ENCODE measurements at regions of chr13 and their contacts with region 1.

Region 1: GRCh38 chr13:46313432-46314257 is 73.4 kb downstream of the RUBCNL start:
- DNase-seq: peak in 1 of 2 donors; percentile 48
- ATAC-seq: peak; percentile 74 to 85 (median 85)
- H3K4me3 ChIP-seq: no peak overlapping the region
- H3K4me3 Mint-ChIP-seq: peak overlapping the region; percentile 83
- H3K27ac ChIP-seq: peak overlapping the region; percentile 93
- H3K27ac Mint-ChIP-seq: peak overlapping the region; percentile 80 to 99
- H3K4me1 ChIP-seq: peaks cover 13% of the 10 kb centered on the region
- H3K4me1 Mint-ChIP-seq: peaks cover 22% of the 10 kb centered on the region in 2 donors
- H3K27me3 ChIP-seq: no peaks in the 10 kb centered on the region
- H3K27me3 Mint-ChIP-seq: no peaks in the 10 kb centered on the region
- CTCF ChIP-seq: no peak

Region 2: DNA sequence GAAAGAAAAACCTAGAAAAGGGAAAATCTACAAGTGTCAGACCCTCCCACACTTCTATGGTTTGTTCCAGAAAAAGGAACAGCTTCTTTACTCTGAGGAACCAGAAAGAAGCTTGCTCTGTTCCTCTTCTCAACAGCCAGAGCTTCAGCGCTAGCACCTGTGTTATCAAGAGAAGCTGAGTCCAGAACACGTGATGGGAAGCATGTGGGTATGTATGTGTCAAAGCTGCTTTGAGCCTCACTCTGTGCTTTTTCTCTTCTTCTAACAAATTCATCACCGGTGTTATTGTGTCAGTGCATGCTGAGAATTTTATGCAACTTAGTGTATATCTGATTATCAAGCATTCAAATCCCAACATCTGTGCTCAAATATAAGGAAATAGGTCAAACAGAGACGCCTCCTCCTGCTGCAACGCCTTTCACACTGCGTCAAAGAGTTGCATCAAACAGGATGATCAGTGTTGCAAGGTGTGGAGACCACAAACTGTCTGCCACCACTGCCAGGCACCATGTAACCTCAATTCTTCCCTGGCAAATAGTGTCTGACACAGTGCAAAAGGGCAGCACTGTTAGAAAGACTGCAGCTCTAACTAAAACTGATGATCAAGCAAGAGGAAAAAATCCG is 18.0 kb before region 1 on chr13:
- intact Hi-C with region 1: loop called (anchors 1 kb)
- DNase-seq: peak; percentile 68 to 92
- ATAC-seq: peak; percentile 80 to 94 (median 91)
- H3K4me3 ChIP-seq: no peak overlapping the region
- H3K4me3 Mint-ChIP-seq: peak overlapping the region; percentile 79
- H3K27ac ChIP-seq: peak overlapping the region; percentile 83
- H3K27ac Mint-ChIP-seq: peak overlapping the region; percentile 88 to 97
- H3K4me1 ChIP-seq: peaks cover 29% of the 10 kb centered on the region
- H3K4me1 Mint-ChIP-seq: peaks cover 39 to 40% of the 10 kb centered on the region in 2 donors
- H3K27me3 ChIP-seq: no peaks in the 10 kb centered on the region
- H3K27me3 Mint-ChIP-seq: no peaks in the 10 kb centered on the region
- CTCF ChIP-seq: no peak